ENCODE measurements at regions of chr7 and their contacts with region 1.

Region 1: GRCh38 chr7:117673839-117674238 is 194.0 kb downstream of the CFTR start:
- DNase-seq: peak in 1 of 2 experiments; percentile 39
- H3K4me3 ChIP-seq: no peak overlapping the region
- H3K4me3 Mint-ChIP-seq: peak overlapping the region; percentile 65
- H3K27ac Mint-ChIP-seq: peak overlapping the region; percentile 87
- H3K4me1 ChIP-seq: peaks cover 60% of the 10 kb centered on the region
- H3K4me1 Mint-ChIP-seq: peaks cover 59% of the 10 kb centered on the region
- H3K27me3 ChIP-seq: no peaks in the 10 kb centered on the region
- H3K27me3 Mint-ChIP-seq: no peaks in the 10 kb centered on the region
- CTCF ChIP-seq: peak; percentile 22 to 46

Region 2: GRCh38 chr7:117458977-117459583 is 214.8 kb before region 1 on chr7:
- CTCF ChIA-PET with region 1: no interaction called
- POLR2A ChIA-PET with region 1: no interaction called
- intact Hi-C with region 1: loop called (anchors 1 kb)
- DNase-seq: peak in 1 of 2 experiments; percentile 30
- H3K4me3 ChIP-seq: no peak overlapping the region
- H3K4me3 Mint-ChIP-seq: no peak overlapping the region
- H3K27ac Mint-ChIP-seq: no peak overlapping the region
- H3K4me1 ChIP-seq: 0 out of 2 replicates have a peak, but pooled peaks cover 2% of the 10 kb centered on the region
- H3K4me1 Mint-ChIP-seq: no peaks in the 10 kb centered on the region
- H3K27me3 ChIP-seq: no peaks in the 10 kb centered on the region
- H3K27me3 Mint-ChIP-seq: no peaks in the 10 kb centered on the region
- CTCF ChIP-seq: peak; percentile 65 to 71

Region 3: GRCh38 chr7:117659453-117660086 is 14.3 kb before region 1 on chr7:
- CTCF ChIA-PET with region 1: no interaction called
- POLR2A ChIA-PET with region 1: interaction called, 9 read pairs
- intact Hi-C with region 1: loop called (anchors 2 kb)
- DNase-seq: peak; percentile 56 to 67
- H3K4me3 ChIP-seq: no peak overlapping the region
- H3K4me3 Mint-ChIP-seq: no peak overlapping the region
- H3K27ac Mint-ChIP-seq: peak overlapping the region; percentile 81
- H3K4me1 ChIP-seq: peaks cover 47% of the 10 kb centered on the region
- H3K4me1 Mint-ChIP-seq: peaks cover 49% of the 10 kb centered on the region
- H3K27me3 ChIP-seq: no peaks in the 10 kb centered on the region
- H3K27me3 Mint-ChIP-seq: no peaks in the 10 kb centered on the region
- CTCF ChIP-seq: no peak